ENCODE measurements at regions of chr12 and their contacts with region 1.

Region 1: DNA sequence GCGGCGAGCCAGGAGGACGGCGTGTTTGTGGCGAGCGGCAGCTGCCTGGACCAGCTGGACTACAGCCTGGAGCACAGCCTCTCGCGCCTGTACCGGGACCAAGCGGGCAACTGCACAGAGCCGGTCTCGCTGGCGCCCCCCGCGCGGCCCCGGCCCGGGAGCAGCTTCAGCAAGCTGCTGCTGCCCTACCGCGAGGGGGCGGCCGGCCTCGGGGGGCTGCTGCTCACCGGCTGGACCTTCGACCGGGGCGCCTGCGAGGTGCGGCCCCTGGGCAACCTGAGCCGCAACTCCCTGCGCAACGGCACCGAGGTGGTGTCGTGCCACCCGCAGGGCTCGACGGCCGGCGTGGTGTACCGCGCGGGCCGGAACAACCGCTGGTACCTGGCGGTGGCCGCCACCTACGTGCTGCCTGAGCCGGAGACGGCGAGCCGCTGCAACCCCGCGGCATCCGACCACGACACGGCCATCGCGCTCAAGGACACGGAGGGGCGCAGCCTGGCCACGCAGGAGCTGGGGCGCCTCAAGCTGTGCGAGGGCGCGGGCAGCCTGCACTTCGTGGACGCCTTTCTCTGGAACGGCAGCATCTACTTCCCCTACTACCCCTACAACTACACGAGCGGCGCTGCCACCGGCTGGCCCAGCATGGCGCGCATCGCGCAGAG is 873 bp downstream of the PLXNC1 start:
- DNase-seq: peak; percentile 43 to 79 (median 74)
- ATAC-seq: peak; percentile 27 to 42
- H3K4me3 ChIP-seq: peak overlapping the region; percentile 88
- H3K27ac ChIP-seq: no peak overlapping the region
- H3K4me1 ChIP-seq: no peaks in the 10 kb centered on the region
- H3K27me3 ChIP-seq: no peaks in the 10 kb centered on the region

Region 2: GRCh38 chr12:94289461-94290312 is 140.4 kb after region 1 on chr12:
- intact Hi-C with region 1: loop called in 1 of 4 experiments (anchors 10 kb)
- DNase-seq: peak in 2 of 3 donors; percentile 35 to 78
- ATAC-seq: peak; percentile 74 to 75
- H3K4me3 ChIP-seq: no peak overlapping the region
- H3K27ac ChIP-seq: peak overlapping the region; percentile 83
- H3K4me1 ChIP-seq: peaks cover 14% of the 10 kb centered on the region
- H3K27me3 ChIP-seq: no peaks in the 10 kb centered on the region

Region 3: GRCh38 chr12:94435511-94435927 is 286.3 kb after region 1 on chr12:
- intact Hi-C with region 1: loop called in 3 of 4 experiments (anchors 5 to 10 kb)
- DNase-seq: no peak
- ATAC-seq: peak; percentile 41 to 44
- H3K4me3 ChIP-seq: no peak overlapping the region
- H3K27ac ChIP-seq: no peak overlapping the region
- H3K4me1 ChIP-seq: no peaks in the 10 kb centered on the region
- H3K27me3 ChIP-seq: no peaks in the 10 kb centered on the region

Measured in right cardiac atrium (tissue), 5 donors.